Motor neuron (in vitro differentiated cells): ENCODE measurements at regions of chr5 and their contacts with region 1.

Region 1: DNA sequence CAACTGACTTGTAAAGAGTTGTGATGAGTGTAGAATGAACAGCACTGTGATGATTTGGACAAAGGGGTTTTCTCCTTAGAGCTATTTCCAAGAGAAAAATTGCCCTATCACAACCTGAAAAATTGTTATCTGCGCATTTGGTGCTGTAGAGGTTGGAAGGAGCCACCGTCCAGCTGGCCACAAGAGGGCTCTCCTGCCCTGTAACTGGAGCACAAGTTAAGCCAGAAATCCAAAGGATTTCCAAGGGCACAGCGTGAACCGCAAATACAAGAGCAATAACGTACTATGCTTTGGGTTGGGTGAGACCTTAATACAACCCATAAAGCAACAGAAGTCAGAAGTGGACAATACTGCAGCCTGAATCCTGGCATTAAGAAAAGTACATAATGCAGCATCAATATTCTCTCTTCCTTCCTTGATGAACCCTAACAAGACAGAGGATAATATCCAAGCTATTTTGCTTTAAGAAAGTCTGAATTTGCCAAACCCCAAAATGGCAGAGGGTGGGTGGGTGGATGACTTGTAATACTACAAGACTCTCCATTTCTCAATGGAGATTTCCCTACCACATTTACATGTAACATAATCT is 56.8 kb upstream of the SMIM32 start:
- ATAC-seq: peak; percentile 76 to 99 (median 89)
- H3K4me3 ChIP-seq: no peak overlapping the region
- H3K27ac ChIP-seq: no peak overlapping the region
- H3K4me1 ChIP-seq: no peaks in the 10 kb centered on the region

Region 2: GRCh38 chr5:136424835-136425584 is 175.2 kb after region 1 on chr5:
- in situ Hi-C with region 1: loop called in 2 of 9 experiments (anchors 25 kb)
- ATAC-seq: peak; percentile 51 to 83 (median 60)
- H3K4me3 ChIP-seq: no peak overlapping the region
- H3K27ac ChIP-seq: no peak overlapping the region
- H3K4me1 ChIP-seq: peaks cover 12 to 16% of the 10 kb centered on the region in 2 donors